Activated T-helper 2 cell treated with anti-CD3 and anti-CD28 coated beads, Interferon-gamma antibody, Interleukin-2, Interleukin-4, amounts not matched to agents 10 μg/mL and 5 μg/mL and 100 μg/mL, durations not matched to agents 14 hours and 24 hours and 36 hours (primary cell): ENCODE measurements at regions of chr9 and their contacts with region 1.

Region 1: GRCh38 chr9:37903647-37904444 is at the start of gene SLC25A51:
- DNase-seq: peak; percentile 91
- H3K4me3 Mint-ChIP-seq: peak within 1 kb of the TSS; percentile 84
- H3K27ac Mint-ChIP-seq: peak within 1 kb of the TSS; percentile 90
- H3K4me1 Mint-ChIP-seq: peaks cover 15% of the 10 kb centered on the region
- H3K27me3 Mint-ChIP-seq: peaks cover 2% of the 10 kb centered on the region
- total RNA-seq, gene SLC25A51: 29.7 and 31.4 TPM in 2 replicates

Region 2: DNA sequence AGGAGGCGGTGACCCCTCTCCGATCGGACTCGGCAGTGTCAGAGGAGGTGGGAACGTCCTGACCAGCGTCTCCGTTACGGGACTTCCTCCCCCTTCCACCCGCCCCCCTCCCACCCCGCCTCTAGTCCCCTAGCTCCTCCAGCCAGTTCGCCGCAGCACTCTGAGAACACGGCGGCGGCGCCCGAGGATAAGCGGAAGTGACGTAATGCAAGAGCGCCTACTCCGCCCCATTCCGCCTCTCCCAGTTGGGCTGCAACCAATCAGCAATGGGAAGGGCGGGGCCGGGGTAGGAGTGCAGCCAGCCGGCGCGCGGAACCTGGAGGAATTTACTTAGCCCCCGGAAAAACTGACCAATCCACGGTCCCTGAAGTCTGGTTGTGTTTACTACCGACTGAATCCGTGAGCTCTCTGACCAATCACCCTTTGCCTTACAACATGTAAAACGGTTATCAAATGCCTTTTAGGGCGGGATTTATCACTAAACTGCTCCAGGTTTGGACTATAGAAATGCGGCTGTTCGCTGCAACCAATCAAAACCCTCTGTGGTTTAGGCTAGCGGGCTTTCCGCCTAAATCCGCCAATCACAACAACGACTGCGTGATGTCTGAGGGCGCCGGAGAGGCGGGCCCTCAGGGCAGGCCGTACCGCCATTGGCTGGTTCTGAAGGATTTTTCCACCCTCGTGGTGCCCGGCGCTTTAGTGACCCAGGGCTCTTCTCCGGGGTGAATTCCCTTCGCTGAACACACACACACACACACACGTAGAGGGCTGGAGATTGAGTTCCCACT is 438.4 kb before region 1 on chr9 and contains the start of gene ZBTB5:
- intact Hi-C with region 1: loop called (anchors 5 kb)
- DNase-seq: peak; percentile 98
- H3K4me3 Mint-ChIP-seq: peak within 1 kb of the TSS; percentile 96
- H3K27ac Mint-ChIP-seq: peak within 1 kb of the TSS; percentile 99
- H3K4me1 Mint-ChIP-seq: peaks cover 25% of the 10 kb centered on the region
- H3K27me3 Mint-ChIP-seq: no peaks in the 10 kb centered on the region
- total RNA-seq, gene ZBTB5: 10.6 and 11.0 TPM in 2 replicates

Region 3: DNA sequence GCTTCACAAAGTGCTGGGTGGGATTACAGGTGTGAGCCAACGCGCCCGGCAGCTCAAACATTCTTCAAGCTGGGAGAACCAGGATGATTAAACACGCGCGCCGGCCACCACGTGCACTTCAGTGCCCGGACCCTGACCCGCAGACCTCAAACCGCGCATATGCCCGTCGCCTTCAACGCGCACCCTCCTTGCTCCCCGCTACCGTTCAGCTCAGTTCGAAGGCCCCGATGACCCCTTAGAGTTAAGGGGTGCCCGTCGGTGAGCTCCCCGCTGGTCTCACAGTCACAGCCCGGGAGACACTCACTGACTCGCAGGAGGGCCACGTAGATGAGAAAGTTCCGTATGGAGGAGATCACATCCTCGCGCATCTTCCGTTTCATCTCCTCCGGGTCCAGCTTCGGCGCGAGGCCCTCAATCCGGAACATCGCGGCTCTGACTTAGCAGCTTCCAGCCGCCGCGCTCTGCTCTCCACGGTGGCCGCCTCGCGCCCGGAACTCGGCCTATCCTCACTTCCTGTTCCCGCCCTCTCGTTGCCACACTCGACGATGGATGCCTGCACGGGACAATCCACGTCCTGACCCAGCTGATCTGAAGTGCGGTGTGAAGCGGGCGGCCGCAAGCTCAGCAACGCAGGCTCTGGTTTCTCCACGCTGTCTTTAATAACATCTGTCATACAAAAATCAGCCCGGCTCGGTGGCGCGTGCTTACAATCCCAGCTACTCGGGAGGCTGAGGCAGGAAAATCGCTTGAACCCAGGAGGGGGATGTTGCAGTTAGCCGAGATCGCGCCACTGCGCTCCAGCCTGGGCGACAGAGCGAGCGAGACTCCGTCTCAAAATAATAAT is 311.5 kb before region 1 on chr9 and contains the start of gene TOMM5:
- intact Hi-C with region 1: loop called (anchors 5 kb)
- DNase-seq: peak; percentile 89
- H3K4me3 Mint-ChIP-seq: peak within 1 kb of the TSS; percentile 98
- H3K27ac Mint-ChIP-seq: peak within 1 kb of the TSS; percentile 97
- H3K4me1 Mint-ChIP-seq: peaks cover 22% of the 10 kb centered on the region
- H3K27me3 Mint-ChIP-seq: peaks cover 16% of the 10 kb centered on the region
- total RNA-seq, gene TOMM5: 153 and 155 TPM in 2 replicates

Region 4: DNA sequence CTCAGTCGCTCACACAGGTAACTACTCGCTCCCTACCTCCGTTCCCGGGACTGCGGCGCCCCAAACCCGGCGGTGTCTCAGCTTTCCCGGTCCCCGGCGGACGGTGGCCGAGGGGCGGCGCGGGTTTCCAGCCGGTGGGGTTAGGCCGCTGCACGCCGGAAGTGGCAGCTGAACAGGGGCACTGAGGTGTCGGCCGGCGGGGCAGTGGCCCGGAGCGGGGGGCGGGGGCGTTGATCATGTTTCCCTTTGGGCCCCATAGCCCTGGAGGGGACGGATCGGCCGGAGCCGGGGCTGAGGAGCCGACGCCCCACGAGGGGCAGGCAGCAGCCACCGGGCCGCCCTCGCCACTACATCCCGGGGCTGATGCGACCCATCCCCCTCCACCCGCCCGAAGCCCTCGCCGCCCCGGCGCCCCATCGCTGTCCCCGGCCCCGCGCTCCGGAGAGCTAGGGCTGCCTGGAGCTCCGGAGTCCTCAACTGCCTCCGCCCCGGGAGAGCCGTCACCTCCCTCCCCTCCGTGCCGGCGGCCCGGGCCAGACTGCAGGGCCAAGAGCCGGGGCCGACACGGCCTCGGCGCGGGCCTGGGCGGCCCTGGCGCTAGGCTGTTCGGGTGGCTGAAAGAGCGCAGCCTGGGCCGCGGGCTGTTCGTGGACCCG is 103.1 kb before region 1 on chr9 and contains the start of gene DCAF10:
- intact Hi-C with region 1: loop called (anchors 1 kb)
- DNase-seq: peak; percentile 86
- H3K4me3 Mint-ChIP-seq: peak within 1 kb of the TSS; percentile 89
- H3K27ac Mint-ChIP-seq: peak within 1 kb of the TSS; percentile 77
- H3K4me1 Mint-ChIP-seq: peaks cover 28% of the 10 kb centered on the region
- H3K27me3 Mint-ChIP-seq: no peaks in the 10 kb centered on the region
- total RNA-seq, gene DCAF10: 17.4 and 18.4 TPM in 2 replicates

Region 5: GRCh38 chr9:37859043-37859442 is 44.8 kb before region 1 on chr9:
- intact Hi-C with region 1: loop called (anchors 5 kb)
- DNase-seq: no peak
- H3K4me3 Mint-ChIP-seq: no peak overlapping the region
- H3K27ac Mint-ChIP-seq: no peak overlapping the region
- H3K4me1 Mint-ChIP-seq: no peaks in the 10 kb centered on the region
- H3K27me3 Mint-ChIP-seq: no peaks in the 10 kb centered on the region

Region 6: GRCh38 chr9:37889536-37889935 is 14.3 kb before region 1 on chr9:
- intact Hi-C with region 1: no loop called
- DNase-seq: no peak
- H3K4me3 Mint-ChIP-seq: no peak overlapping the region
- H3K27ac Mint-ChIP-seq: no peak overlapping the region
- H3K4me1 Mint-ChIP-seq: peaks cover 7% of the 10 kb centered on the region
- H3K27me3 Mint-ChIP-seq: no peaks in the 10 kb centered on the region

Region 7: GRCh38 chr9:38008168-38009034 is 104.6 kb after region 1 on chr9:
- intact Hi-C with region 1: loop called (anchors 5 kb)
- DNase-seq: no peak
- H3K4me3 Mint-ChIP-seq: peak overlapping the region; percentile 45
- H3K27ac Mint-ChIP-seq: peak overlapping the region; percentile 93
- H3K4me1 Mint-ChIP-seq: peaks cover 29% of the 10 kb centered on the region
- H3K27me3 Mint-ChIP-seq: no peaks in the 10 kb centered on the region

Region 8: DNA sequence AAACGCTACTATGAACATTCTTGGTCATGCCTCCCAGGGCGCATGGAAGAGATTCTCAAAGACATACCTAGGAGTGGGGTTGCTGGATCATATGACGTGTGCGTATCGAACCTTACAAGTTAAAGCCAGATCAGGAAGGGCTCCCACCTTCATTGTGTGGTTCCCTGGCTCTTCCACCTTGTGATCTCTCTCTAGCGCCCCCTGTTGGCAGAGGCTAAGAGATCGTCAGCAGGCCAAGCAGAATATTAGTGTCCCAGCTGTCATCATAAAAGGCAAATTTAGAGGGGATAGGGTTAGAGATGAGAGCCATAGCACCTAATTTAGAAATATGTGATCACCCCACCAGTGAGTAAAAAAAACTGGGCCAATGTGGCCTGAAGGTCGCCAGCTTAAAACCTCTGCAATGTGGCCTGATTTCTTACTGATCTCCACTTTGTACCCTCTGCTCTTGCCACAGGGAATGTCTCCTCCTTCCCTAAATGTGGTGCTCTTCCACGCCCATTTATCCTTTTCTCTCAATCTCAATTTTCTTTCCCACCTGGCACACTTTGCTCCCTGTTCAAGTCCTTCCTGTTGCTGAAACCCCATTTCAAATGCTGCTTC is 256.9 kb after region 1 on chr9:
- intact Hi-C with region 1: loop called (anchors 2 kb)
- DNase-seq: peak; percentile 37
- H3K4me3 Mint-ChIP-seq: no peak overlapping the region
- H3K27ac Mint-ChIP-seq: no peak overlapping the region
- H3K4me1 Mint-ChIP-seq: no peaks in the 10 kb centered on the region
- H3K27me3 Mint-ChIP-seq: no peaks in the 10 kb centered on the region